ENCODE measurements at regions of chr18 and their contacts with region 1.

Region 1: GRCh38 chr18:41618147-41618546 is 336.9 kb upstream of the PIK3C3 start:
- DNase-seq: no peak
- H3K4me3 ChIP-seq: no peak overlapping the region
- H3K27ac ChIP-seq: no peak overlapping the region
- H3K27me3 ChIP-seq: peaks cover 0 to 3% (median 0%) of the 10 kb centered on the region in 45 donors
- CTCF ChIP-seq: no peak

Region 2: GRCh38 chr18:41466436-41467160 is 151.5 kb before region 1 on chr18:
- intact Hi-C with region 1: no loop called
- DNase-seq: no peak
- H3K4me3 ChIP-seq: no peak overlapping the region
- H3K27ac ChIP-seq: no peak overlapping the region
- H3K27me3 ChIP-seq: peaks cover 0 to 13% (median 0%) of the 10 kb centered on the region in 45 donors
- CTCF ChIP-seq: no peak

Region 3: GRCh38 chr18:41553716-41554115 is 64.4 kb before region 1 on chr18:
- intact Hi-C with region 1: no loop called
- DNase-seq: no peak
- H3K4me3 ChIP-seq: no peak overlapping the region
- H3K27ac ChIP-seq: no peak overlapping the region
- H3K27me3 ChIP-seq: peaks cover 0 to 4% (median 0%) of the 10 kb centered on the region in 45 donors
- CTCF ChIP-seq: no peak

Region 4: DNA sequence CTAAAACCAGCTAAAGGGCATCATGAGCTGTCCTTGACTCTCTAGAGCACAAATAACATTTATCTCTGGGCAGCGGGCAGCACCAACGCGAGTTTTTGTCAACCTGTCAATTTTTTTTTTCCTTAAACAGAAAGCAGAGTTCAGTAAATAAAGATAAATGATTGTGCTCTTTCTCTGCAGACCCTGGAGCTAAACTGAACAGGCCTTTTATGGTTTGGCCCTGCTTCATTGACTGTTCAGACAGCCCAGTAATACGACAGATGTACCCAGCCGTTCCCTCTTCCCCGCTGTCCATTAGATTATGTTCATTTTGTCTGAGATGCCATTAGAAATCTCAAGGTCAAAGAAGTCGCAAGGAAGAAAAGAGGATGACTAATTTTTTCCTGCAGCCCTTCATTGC is 56.4 kb after region 1 on chr18:
- intact Hi-C with region 1: loop called in 1 of 2 experiments (anchors 10 kb)
- DNase-seq: no peak
- H3K4me3 ChIP-seq: no peak overlapping the region
- H3K27ac ChIP-seq: no peak overlapping the region
- H3K27me3 ChIP-seq: peaks cover 0 to 16% (median 0%) of the 10 kb centered on the region in 45 donors
- CTCF ChIP-seq: no peak